Ovary (tissue), 10 donors: ENCODE measurements at regions of chr1 and their contacts with region 1.

Region 1: GRCh38 chr1:96973605-96974004 is 252.0 kb downstream of the PTBP2 start:
- DNase-seq: peak in 1 of 5 donors; percentile 15
- H3K4me3 ChIP-seq: no peak overlapping the region
- H3K27ac ChIP-seq: no peak overlapping the region
- H3K4me1 ChIP-seq: no peaks in the 10 kb centered on the region
- H3K27me3 ChIP-seq: no peaks in the 10 kb centered on the region
- CTCF ChIP-seq: no peak
- EP300 ChIP-seq: no peak
- POLR2A ChIP-seq: no peak

Region 2: GRCh38 chr1:98053471-98054366 is 1080.1 kb after region 1 on chr1:
- intact Hi-C with region 1: loop called in 1 of 4 experiments (anchors 5 kb)
- DNase-seq: peak; percentile 32 to 68 (median 50)
- H3K4me3 ChIP-seq: peak overlapping the region; percentile 21
- H3K27ac ChIP-seq: no peak overlapping the region
- H3K4me1 ChIP-seq: peaks cover 3% of the 10 kb centered on the region
- H3K27me3 ChIP-seq: no peaks in the 10 kb centered on the region
- CTCF ChIP-seq: peak; percentile 44 to 78 (median 64)
- EP300 ChIP-seq: no peak
- POLR2A ChIP-seq: no peak